ENCODE measurements at regions of chr3 and their contacts with region 1.

Region 1: DNA sequence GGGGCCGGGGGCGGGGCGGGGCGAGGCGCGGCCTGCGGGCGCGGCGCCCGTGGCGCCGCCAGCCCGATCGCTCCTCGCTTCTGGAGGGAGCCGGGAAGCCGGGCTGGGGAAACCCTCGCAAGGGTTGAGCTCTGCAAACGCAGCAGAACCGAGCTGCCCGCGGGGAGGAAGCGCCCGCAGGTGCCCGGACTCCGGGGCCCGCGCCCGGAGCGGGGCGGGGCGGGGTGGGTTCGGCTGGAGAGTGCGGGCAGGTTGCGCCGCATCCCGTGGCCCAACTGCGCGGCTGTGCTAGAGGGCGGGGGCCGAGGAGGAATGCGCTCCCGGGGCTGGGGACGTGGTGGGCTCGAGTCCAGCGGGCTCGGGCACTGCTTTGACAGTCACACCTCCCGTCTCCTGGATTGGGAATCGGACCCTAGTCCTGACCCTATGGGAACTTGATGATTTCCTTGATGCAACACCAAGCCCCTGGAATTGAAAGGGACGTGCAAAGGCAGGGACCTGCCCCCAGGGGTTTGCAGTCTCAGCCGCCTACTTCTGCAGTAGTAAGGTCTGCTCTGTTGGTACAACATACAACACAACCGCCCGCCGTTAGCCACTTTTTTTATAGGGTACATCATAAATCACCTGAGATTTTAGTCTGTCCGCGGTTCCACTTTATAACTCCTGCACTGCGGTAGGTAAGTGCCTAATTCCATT is 34.3 kb downstream of the ZBTB38 start:
- DNase-seq: peak; percentile 80 to 87
- ATAC-seq: peak; percentile 78 to 82 (median 80)
- H3K4me3 ChIP-seq: peak overlapping the region; percentile 84
- H3K27ac ChIP-seq: peak overlapping the region; percentile 96
- H3K4me1 ChIP-seq: peaks cover 36% of the 10 kb centered on the region
- H3K27me3 ChIP-seq: no peaks in the 10 kb centered on the region
- CTCF ChIP-seq: no peak

Region 2: DNA sequence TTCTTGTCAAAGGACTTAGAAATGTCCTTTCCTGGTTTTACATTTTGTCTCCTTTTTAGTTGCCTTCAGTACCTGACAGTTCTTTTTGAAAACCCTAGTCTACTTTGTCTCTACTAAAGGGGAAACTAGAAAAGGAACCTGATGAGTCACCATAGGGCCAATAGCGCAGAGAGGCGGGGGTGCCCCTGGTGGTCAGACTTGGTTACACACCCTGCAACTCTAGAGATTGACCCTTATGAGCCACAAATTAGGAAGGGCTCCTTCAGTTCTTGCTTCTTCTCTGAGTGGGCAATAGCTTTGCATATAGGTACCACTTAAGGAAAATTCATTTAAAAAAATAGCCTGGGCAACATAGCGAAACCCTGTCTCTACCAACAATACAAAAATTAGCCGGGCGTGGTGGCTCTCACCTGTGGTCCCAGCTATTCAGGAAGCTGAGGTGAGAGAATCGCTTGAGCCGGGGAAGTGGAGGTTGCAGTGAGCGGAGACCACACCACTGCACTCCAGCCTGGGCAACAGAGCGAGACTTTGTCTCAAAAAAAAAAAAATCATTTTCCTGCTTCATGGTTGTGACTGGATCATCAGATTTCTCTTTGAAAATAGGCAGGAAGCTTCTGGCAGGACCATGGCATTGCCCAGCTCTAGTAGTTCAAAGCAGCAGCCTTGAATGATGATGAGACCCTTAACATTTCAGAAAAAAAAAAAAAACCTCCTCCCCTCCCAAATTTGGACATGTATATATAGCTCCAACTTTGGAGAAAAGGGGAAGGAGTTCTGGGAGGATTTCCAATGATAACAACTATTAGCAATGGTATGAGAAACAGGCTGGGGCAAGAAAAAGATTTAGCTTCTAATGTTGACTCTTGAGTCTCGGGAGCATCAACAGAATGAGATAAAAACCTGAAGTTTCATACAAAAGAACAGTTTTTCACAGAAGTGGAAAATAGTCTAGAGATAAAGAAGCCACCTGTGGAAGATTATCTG is 39.0 kb after region 1 on chr3:
- intact Hi-C with region 1: loop called (anchors 5 kb)
- DNase-seq: peak; percentile 75 to 76
- ATAC-seq: peak; percentile 87 to 94 (median 93)
- H3K4me3 ChIP-seq: no peak overlapping the region
- H3K27ac ChIP-seq: peak overlapping the region; percentile 64
- H3K4me1 ChIP-seq: peaks cover 28% of the 10 kb centered on the region
- H3K27me3 ChIP-seq: no peaks in the 10 kb centered on the region
- CTCF ChIP-seq: peak; percentile 87